Activated T-helper 2 cell treated with anti-CD3 and anti-CD28 coated beads, Interferon-gamma antibody, Interleukin-2, Interleukin-4, amounts not matched to agents 10 μg/mL and 5 μg/mL and 100 μg/mL, durations not matched to agents 14 hours and 24 hours and 36 hours (primary cell): ENCODE measurements at regions of chr7 and their contacts with region 1.

Region 1: DNA sequence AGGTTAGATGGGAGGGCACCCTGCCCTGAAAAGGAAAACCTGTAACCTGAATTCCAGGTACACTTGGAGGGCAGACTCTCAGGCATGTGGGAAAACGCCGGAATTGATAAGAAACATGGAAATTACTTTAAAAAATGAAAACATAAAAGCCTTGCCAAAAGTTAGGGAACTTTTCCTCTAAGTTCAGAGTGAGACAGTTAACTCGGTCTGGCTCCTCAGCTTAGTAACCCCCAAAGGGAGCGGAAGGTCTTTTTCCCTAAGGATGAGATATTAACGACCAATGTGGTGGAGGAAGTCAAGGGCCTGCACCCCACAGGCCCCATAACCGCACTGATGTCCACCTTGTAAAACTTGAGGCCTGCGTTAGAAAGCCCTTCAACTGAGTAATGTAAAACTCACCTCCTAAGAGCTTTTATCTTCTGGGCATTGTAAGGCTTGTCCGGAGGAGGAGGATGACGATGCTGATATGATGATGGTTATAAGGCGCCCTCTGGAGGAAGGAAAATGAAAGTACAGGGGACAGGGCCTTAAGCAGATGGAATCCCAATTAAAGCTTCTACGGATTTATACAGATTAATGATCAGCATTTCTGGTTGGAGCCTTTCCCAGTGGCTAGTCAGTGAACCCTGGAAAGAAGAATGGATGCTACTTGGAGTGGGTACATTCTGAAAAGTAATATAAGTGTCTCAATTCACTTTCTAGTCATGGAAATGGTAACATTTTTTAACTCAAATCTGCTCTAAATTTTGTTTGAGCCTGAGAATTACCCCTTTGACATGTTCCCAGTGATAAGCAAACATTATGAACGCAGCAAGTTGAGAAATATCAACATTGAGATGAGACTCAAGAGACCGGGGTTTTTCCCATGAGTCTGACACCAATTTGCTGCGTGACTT is 694 bp downstream of the COL1A2 start:
- DNase-seq: peak; percentile 35
- H3K4me3 Mint-ChIP-seq: peak overlapping the region; percentile 70
- H3K27ac Mint-ChIP-seq: no peak overlapping the region
- H3K4me1 Mint-ChIP-seq: peaks cover 23% of the 10 kb centered on the region
- H3K27me3 Mint-ChIP-seq: peaks cover 3% of the 10 kb centered on the region

Region 2: GRCh38 chr7:93902777-93903423 is 492.5 kb before region 1 on chr7:
- intact Hi-C with region 1: loop called (anchors 1 kb)
- DNase-seq: no peak
- H3K4me3 Mint-ChIP-seq: no peak overlapping the region
- H3K27ac Mint-ChIP-seq: no peak overlapping the region
- H3K4me1 Mint-ChIP-seq: no peaks in the 10 kb centered on the region
- H3K27me3 Mint-ChIP-seq: peaks cover 17% of the 10 kb centered on the region

Region 3: GRCh38 chr7:94087664-94088352 is 307.6 kb before region 1 on chr7:
- intact Hi-C with region 1: loop called (anchors 10 kb)
- DNase-seq: peak; percentile 34
- H3K4me3 Mint-ChIP-seq: peak overlapping the region; percentile 37
- H3K27ac Mint-ChIP-seq: no peak overlapping the region
- H3K4me1 Mint-ChIP-seq: peaks cover 6% of the 10 kb centered on the region
- H3K27me3 Mint-ChIP-seq: peaks cover 41% of the 10 kb centered on the region

Region 4: GRCh38 chr7:94100723-94101345 is 294.6 kb before region 1 on chr7:
- intact Hi-C with region 1: no loop called
- DNase-seq: no peak
- H3K4me3 Mint-ChIP-seq: no peak overlapping the region
- H3K27ac Mint-ChIP-seq: no peak overlapping the region
- H3K4me1 Mint-ChIP-seq: no peaks in the 10 kb centered on the region
- H3K27me3 Mint-ChIP-seq: no peaks in the 10 kb centered on the region

Region 5: GRCh38 chr7:94276795-94277194 is 118.6 kb before region 1 on chr7:
- intact Hi-C with region 1: loop called (anchors 5 kb)
- DNase-seq: no peak
- H3K4me3 Mint-ChIP-seq: no peak overlapping the region
- H3K27ac Mint-ChIP-seq: no peak overlapping the region
- H3K4me1 Mint-ChIP-seq: peaks cover 7% of the 10 kb centered on the region
- H3K27me3 Mint-ChIP-seq: peaks cover 22% of the 10 kb centered on the region

Region 6: GRCh38 chr7:94657771-94658693 is 262.6 kb after region 1 on chr7:
- intact Hi-C with region 1: loop called (anchors 5 kb)
- DNase-seq: peak; percentile 89
- H3K4me3 Mint-ChIP-seq: peak overlapping the region; percentile 82
- H3K27ac Mint-ChIP-seq: no peak overlapping the region
- H3K4me1 Mint-ChIP-seq: peaks cover 22% of the 10 kb centered on the region
- H3K27me3 Mint-ChIP-seq: peaks cover 24% of the 10 kb centered on the region